ENCODE measurements at regions of chr3 and their contacts with region 1.

Region 1: DNA sequence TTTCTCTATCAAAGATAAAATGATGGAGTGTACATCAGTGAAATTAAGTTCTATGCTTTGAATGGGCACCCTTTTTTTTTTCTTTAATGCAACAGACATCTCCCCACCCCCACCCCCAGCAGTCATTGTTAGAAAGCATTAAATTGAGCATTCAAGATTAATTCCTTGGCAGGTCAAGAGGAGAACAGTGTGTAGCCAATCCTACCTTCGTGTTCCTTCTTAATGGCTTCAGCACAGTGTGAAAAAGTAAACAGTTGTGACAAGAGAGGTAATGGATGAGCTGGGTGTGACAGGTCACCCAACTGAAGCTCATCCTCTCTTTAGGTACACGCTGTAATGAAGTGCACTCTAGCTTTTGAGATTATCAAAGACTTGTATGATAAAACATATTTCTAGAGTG is 198.5 kb upstream of the RARB start:
- DNase-seq: no peak
- ATAC-seq: no peak
- H3K4me3 ChIP-seq: no peak overlapping the region
- H3K4me3 Mint-ChIP-seq: no peak overlapping the region
- H3K27ac ChIP-seq: no peak overlapping the region
- H3K27ac Mint-ChIP-seq: no peak overlapping the region
- H3K4me1 ChIP-seq: no peaks in the 10 kb centered on the region
- H3K4me1 Mint-ChIP-seq: no peaks in the 10 kb centered on the region
- H3K27me3 ChIP-seq: no peaks in the 10 kb centered on the region
- H3K27me3 Mint-ChIP-seq: no peaks in the 10 kb centered on the region
- CTCF ChIP-seq: no peak

Region 2: GRCh38 chr3:23819599-23820360 is 1409.8 kb before region 1 on chr3:
- CTCF ChIA-PET with region 1: no interaction called
- POLR2A ChIA-PET with region 1: no interaction called
- intact Hi-C with region 1: no loop called
- DNase-seq: no peak
- ATAC-seq: no peak
- H3K4me3 ChIP-seq: no peak overlapping the region
- H3K4me3 Mint-ChIP-seq: no peak overlapping the region
- H3K27ac ChIP-seq: no peak overlapping the region
- H3K27ac Mint-ChIP-seq: no peak overlapping the region
- H3K4me1 ChIP-seq: no peaks in the 10 kb centered on the region
- H3K4me1 Mint-ChIP-seq: peaks cover 66% of the 10 kb centered on the region
- H3K27me3 ChIP-seq: no peaks in the 10 kb centered on the region
- H3K27me3 Mint-ChIP-seq: no peaks in the 10 kb centered on the region
- CTCF ChIP-seq: no peak

Region 3: DNA sequence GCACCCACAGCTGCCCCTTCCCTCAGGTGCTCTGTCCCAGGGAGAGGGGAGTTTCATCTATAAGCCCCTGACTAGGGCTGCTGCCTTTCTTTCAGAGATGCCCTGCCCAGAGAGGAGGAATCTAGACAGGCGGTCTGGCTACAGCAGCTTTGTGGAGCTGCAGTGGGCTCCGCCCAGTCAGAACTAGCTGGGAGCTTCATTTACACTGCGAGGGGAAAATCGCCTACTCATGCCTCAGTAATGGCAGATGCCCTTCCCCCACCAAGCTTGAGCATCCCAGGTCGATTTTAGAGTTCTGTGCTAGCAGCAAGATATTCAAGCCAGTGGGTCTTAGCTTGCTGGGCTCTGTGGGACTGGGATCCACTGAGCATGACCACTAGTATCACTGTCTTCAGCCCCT is 17.3 kb after region 1 on chr3:
- CTCF ChIA-PET with region 1: no interaction called
- POLR2A ChIA-PET with region 1: no interaction called
- intact Hi-C with region 1: loop called in 1 of 2 experiments (anchors 2 kb)
- DNase-seq: no peak
- ATAC-seq: no peak
- H3K4me3 ChIP-seq: no peak overlapping the region
- H3K4me3 Mint-ChIP-seq: no peak overlapping the region
- H3K27ac ChIP-seq: no peak overlapping the region
- H3K27ac Mint-ChIP-seq: no peak overlapping the region
- H3K4me1 ChIP-seq: no peaks in the 10 kb centered on the region
- H3K4me1 Mint-ChIP-seq: no peaks in the 10 kb centered on the region
- H3K27me3 ChIP-seq: no peaks in the 10 kb centered on the region
- H3K27me3 Mint-ChIP-seq: no peaks in the 10 kb centered on the region
- CTCF ChIP-seq: no peak